Naive thymus-derived CD4-positive, alpha-beta T cell (primary cell): ENCODE measurements at regions of chr14 and their contacts with region 1.

Region 1: GRCh38 chr14:24093901-24094761 is at the start of gene PCK2:
- DNase-seq: peak; percentile 44 to 80 (median 56)
- ATAC-seq: peak; percentile 81
- H3K4me3 ChIP-seq: peak within 1 kb of the TSS; percentile 91
- H3K4me3 Mint-ChIP-seq: peak within 1 kb of the TSS; percentile 91 to 100 (median 98)
- H3K27ac ChIP-seq: peak within 1 kb of the TSS; percentile 92
- H3K27ac Mint-ChIP-seq: peak within 1 kb of the TSS; percentile 90 to 97 (median 96)
- H3K4me1 ChIP-seq: peaks cover 6 to 16% of the 10 kb centered on the region in 2 donors
- H3K4me1 Mint-ChIP-seq: peaks cover 28 to 47% (median 41%) of the 10 kb centered on the region in 7 donors
- H3K27me3 ChIP-seq: no peaks in the 10 kb centered on the region
- H3K27me3 Mint-ChIP-seq: no peaks in the 10 kb centered on the region
- total RNA-seq, gene PCK2: 9.1 to 56.2 (median 14.4) TPM

Region 2: DNA sequence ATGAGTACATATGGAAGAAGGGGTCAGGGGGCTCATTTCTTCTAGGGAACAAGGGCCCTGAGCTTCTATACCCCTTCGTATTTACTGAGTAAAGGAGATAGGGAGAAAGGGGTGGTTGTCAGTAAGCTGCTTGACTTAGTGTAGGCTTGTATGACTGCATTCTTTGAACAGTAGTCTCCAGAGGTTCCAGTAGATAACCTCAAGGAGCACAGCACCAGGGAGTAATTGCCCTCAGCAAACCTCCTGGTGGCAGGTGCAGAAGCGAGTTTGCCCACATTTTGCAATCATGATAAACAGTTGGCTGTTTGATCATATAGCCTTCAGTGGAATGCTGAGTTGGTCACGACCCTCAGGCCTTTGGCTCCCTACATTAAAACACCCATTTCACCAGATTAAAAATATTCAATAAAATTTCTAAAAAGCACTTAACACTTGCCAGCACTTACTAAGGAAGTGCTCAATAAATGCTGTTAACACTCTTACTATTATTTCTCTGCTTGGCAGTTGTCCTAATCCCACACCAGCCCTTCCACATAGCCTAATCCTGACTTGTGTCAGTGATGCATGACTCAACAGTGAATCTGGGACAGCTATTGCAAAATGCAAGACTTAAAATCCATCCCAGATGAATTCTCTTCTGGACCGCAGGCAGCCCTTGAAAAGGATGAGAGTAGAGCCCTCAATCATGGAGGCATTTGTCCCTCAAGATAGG is 109.1 kb before region 1 on chr14:
- CTCF ChIA-PET with region 1: no interaction called
- POLR2A ChIA-PET with region 1: no interaction called
- intact Hi-C with region 1: loop called in 1 of 2 experiments (anchors 1 kb)
- DNase-seq: no peak
- ATAC-seq: no peak
- H3K4me3 ChIP-seq: no peak overlapping the region
- H3K4me3 Mint-ChIP-seq: no peak overlapping the region
- H3K27ac ChIP-seq: no peak overlapping the region
- H3K27ac Mint-ChIP-seq: peak overlapping the region in 2 of 9 donors; percentile 38 to 67
- H3K4me1 ChIP-seq: no peaks in the 10 kb centered on the region
- H3K4me1 Mint-ChIP-seq: peaks cover 7 to 32% (median 22%) of the 10 kb centered on the region in 7 donors
- H3K27me3 ChIP-seq: no peaks in the 10 kb centered on the region
- H3K27me3 Mint-ChIP-seq: no peaks in the 10 kb centered on the region

Region 3: DNA sequence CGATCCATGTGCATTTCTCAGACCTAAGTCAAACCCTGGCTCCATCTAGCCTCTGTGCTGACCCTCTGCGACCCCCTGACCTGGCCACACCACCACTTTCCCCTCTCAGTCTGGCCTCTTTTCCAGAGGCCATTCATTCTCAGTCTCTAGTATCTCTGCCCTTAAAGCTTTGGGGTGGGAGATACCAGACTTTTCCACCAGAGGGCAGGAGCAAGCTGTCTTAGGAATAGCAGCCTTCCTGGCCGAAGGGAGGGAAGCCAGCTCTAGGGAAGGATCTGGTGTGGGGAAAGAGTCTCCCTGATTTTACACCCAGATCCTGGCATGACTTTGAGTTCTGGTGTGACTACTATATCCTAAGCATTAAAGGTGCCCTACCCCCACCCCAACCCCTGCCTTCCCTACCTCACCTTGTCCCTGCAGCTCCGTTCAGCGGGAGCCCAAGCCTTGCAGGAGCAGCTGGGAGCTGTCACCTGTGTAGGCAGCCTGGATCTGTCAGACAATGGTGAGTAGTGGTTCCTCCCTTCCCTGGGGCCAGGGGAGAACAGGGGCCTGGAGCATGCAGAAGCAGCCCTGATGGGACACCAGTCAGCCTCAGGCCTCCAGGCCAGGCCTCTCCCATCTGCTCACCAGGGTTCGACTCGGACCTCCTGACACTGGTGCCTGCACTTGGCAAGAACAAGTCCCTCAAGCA is 35.7 kb before region 1 on chr14:
- CTCF ChIA-PET with region 1: interaction called, 155 read pairs
- POLR2A ChIA-PET with region 1: interaction called, 50 read pairs
- intact Hi-C with region 1: loop called (anchors 1 kb)
- DNase-seq: peak; percentile 22 to 70 (median 49)
- ATAC-seq: peak; percentile 84
- H3K4me3 ChIP-seq: no peak overlapping the region
- H3K4me3 Mint-ChIP-seq: no peak overlapping the region
- H3K27ac ChIP-seq: no peak overlapping the region
- H3K27ac Mint-ChIP-seq: peak overlapping the region in 5 of 9 donors; percentile 22 to 80 (median 67)
- H3K4me1 ChIP-seq: no peaks in the 10 kb centered on the region
- H3K4me1 Mint-ChIP-seq: peaks cover 0 to 8% (median 2%) of the 10 kb centered on the region in 7 donors
- H3K27me3 ChIP-seq: no peaks in the 10 kb centered on the region
- H3K27me3 Mint-ChIP-seq: peaks cover 0 to 8% (median 2%) of the 10 kb centered on the region in 5 donors

Region 4: DNA sequence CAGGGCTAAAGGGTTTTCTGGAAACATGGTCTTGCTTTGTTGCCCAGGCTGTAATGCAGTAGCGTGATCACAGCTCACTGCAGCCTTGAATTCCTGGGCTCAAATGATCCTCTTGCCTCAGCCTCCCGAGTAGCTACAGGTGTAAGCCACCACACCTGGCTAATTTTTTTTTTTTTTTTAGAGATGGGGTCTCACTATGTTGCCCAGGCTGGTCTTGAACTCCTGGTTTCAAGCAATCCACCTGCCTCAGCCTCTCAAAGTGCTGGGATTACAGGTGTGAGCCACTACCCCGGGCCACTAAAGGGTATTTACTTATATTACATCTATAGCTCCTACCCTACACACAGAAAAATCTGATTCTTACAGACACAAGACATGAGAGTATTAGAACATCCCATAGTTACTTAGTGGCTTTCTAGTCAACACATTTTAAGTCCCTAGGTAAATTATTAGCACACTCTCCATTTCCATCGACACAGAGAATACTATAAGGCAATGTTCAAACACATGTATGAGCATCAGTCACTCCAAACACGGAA is 14.3 kb after region 1 on chr14:
- CTCF ChIA-PET with region 1: interaction called, 165 read pairs
- POLR2A ChIA-PET with region 1: interaction called, 85 read pairs
- intact Hi-C with region 1: loop called (anchors 1 kb)
- DNase-seq: no peak
- ATAC-seq: peak; percentile 21
- H3K4me3 ChIP-seq: no peak overlapping the region
- H3K4me3 Mint-ChIP-seq: peak overlapping the region; percentile 3 to 68 (median 46)
- H3K27ac ChIP-seq: peak overlapping the region; percentile 66
- H3K27ac Mint-ChIP-seq: peak overlapping the region; percentile 90 to 97 (median 94)
- H3K4me1 ChIP-seq: peaks cover 11 to 12% of the 10 kb centered on the region in 2 donors
- H3K4me1 Mint-ChIP-seq: peaks cover 9 to 28% (median 13%) of the 10 kb centered on the region in 7 donors
- H3K27me3 ChIP-seq: no peaks in the 10 kb centered on the region
- H3K27me3 Mint-ChIP-seq: no peaks in the 10 kb centered on the region

Region 5: DNA sequence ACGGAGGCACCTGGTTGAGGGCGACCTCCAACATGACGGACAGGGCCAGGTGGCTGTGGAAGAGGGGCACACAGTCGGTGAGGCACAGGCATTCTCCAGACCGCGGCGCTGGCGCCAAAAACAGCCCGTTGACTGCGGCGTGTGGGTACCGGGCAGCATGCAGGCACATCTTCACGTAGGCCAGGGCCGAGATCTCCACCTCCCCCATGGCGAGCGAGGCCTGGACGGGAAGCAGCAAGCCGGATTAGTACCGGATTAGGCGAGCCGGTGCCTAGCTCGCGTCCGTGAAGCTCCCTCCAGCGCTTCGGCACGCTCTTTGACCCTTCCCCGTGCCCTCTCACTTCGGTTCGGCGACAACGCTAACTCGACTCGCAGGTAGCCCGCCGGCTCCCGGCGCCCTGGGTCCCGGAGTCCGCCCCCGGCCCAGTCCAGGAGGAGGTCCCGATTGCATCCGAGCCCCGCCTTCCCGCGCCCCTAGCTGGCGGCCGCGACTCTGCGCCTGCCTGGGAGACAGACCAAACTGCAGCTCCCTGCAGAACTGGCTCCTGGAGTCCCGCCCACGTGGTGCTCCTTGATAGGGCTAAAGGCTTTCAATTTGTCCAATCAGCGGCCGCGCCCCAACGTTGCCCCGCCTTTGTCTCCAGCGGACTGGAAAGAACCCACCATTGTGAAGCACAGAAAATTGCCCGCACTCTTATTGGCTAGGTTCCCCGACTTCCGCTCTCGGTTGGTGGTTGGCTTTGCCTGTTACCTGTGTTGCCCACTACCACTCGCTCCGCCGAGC is 47.2 kb after region 1 on chr14 and contains the start of gene EMC9:
- CTCF ChIA-PET with region 1: no interaction called
- POLR2A ChIA-PET with region 1: interaction called, 5 read pairs
- intact Hi-C with region 1: loop called (anchors 1 kb)
- DNase-seq: peak; percentile 90 to 100 (median 99)
- ATAC-seq: peak; percentile 94
- H3K4me3 ChIP-seq: peak within 1 kb of the TSS; percentile 87
- H3K4me3 Mint-ChIP-seq: peak within 1 kb of the TSS; percentile 85 to 100 (median 94)
- H3K27ac ChIP-seq: peak within 1 kb of the TSS; percentile 83
- H3K27ac Mint-ChIP-seq: peak within 1 kb of the TSS; percentile 83 to 96 (median 93)
- H3K4me1 ChIP-seq: peaks cover 33 to 43% of the 10 kb centered on the region in 2 donors
- H3K4me1 Mint-ChIP-seq: peaks cover 47 to 87% (median 77%) of the 10 kb centered on the region in 7 donors
- H3K27me3 ChIP-seq: no peaks in the 10 kb centered on the region
- H3K27me3 Mint-ChIP-seq: no peaks in the 10 kb centered on the region
- total RNA-seq, gene EMC9: 9.0 to 25.5 (median 22.3) TPM